CD4-positive, alpha-beta T cell (primary cell): ENCODE measurements at regions of chr2 and their contacts with region 1.

Region 1: DNA sequence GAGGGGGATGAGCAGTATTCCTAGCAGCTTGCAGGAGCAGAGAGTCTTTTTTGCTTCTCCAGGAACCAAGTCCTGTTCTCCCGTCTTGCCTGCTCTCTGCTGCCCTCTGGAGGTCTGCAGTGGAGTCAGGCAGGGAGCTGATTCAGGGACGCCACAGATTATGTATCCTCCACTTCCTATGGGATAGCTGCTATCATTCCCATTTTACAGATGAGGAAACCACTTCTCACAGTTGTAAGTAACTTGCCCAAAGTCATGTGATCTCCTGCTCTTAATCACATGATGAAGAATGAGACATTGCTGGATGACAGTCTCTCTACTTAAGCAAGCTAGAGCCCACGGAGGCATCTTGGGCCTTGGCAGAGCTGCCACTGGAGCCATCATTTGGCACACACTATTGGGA is 8.3 kb downstream of the SLC4A5 start:
- DNase-seq: peak; percentile 62 to 86 (median 72)
- ATAC-seq: peak; percentile 91
- H3K4me3 ChIP-seq: no peak overlapping the region
- H3K4me3 Mint-ChIP-seq: no peak overlapping the region
- H3K27ac ChIP-seq: no peak overlapping the region
- H3K27ac Mint-ChIP-seq: no peak overlapping the region
- H3K4me1 ChIP-seq: peaks cover 9% of the 10 kb centered on the region
- H3K4me1 Mint-ChIP-seq: peaks cover 12% of the 10 kb centered on the region
- H3K27me3 ChIP-seq: no peaks in the 10 kb centered on the region
- H3K27me3 Mint-ChIP-seq: no peaks in the 10 kb centered on the region
- CTCF ChIP-seq: peak; percentile 99

Region 2: GRCh38 chr2:73337828-73338227 is 997.1 kb before region 1 on chr2:
- CTCF ChIA-PET with region 1: no interaction called
- POLR2A ChIA-PET with region 1: no interaction called
- intact Hi-C with region 1: no loop called
- DNase-seq: no peak
- ATAC-seq: no peak
- H3K4me3 ChIP-seq: no peak overlapping the region
- H3K4me3 Mint-ChIP-seq: no peak overlapping the region
- H3K27ac ChIP-seq: no peak overlapping the region
- H3K27ac Mint-ChIP-seq: no peak overlapping the region
- H3K4me1 ChIP-seq: no peaks in the 10 kb centered on the region
- H3K4me1 Mint-ChIP-seq: no peaks in the 10 kb centered on the region
- H3K27me3 ChIP-seq: peaks cover 0 to 3% of the 10 kb centered on the region in 2 experiments
- H3K27me3 Mint-ChIP-seq: peaks cover 8% of the 10 kb centered on the region
- CTCF ChIP-seq: no peak

Region 3: GRCh38 chr2:74250189-74250631 is 84.7 kb before region 1 on chr2:
- CTCF ChIA-PET with region 1: interaction called, 47 read pairs
- POLR2A ChIA-PET with region 1: interaction called, 14 read pairs
- intact Hi-C with region 1: loop called (anchors 1 kb)
- DNase-seq: peak; percentile 27 to 79 (median 46)
- ATAC-seq: peak; percentile 56
- H3K4me3 ChIP-seq: no peak overlapping the region
- H3K4me3 Mint-ChIP-seq: no peak overlapping the region
- H3K27ac ChIP-seq: no peak overlapping the region
- H3K27ac Mint-ChIP-seq: no peak overlapping the region
- H3K4me1 ChIP-seq: peaks cover 5% of the 10 kb centered on the region
- H3K4me1 Mint-ChIP-seq: no peaks in the 10 kb centered on the region
- H3K27me3 ChIP-seq: no peaks in the 10 kb centered on the region
- H3K27me3 Mint-ChIP-seq: no peaks in the 10 kb centered on the region
- CTCF ChIP-seq: peak; percentile 84

Region 4: DNA sequence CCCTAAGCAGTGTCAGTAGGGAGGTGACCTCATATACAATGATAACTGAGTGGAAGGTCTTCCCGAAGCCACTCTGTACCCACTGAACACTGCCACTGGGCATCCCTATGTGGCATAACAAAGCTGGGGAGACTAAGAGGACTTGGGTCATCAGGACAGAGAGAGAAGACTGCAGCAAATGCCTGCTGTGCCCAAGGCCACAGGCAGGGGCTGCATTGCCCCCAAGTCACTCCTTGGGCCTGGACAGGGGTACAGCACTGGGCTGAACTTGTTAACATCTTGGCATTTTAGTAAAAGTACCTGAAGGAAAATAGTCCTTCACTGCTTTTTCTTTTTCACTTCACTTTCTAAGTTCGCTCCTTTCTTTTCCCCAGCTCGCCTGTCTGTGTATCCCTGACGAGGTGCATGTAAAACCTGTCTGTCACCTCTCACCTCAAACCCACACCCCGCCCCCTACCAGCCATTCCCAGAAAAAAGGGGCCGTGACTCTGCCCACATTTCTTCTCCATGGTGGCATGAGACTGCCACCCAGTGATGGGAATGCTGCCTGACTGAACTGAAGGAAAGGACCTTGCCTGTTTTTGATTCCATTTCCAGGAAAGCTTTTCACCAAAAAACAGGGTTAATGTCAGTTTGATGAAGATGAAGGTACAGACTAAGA is 73.6 kb before region 1 on chr2:
- CTCF ChIA-PET with region 1: interaction called, 3 read pairs
- POLR2A ChIA-PET with region 1: no interaction called
- intact Hi-C with region 1: loop called in 1 of 2 experiments (anchors 1 kb)
- DNase-seq: no peak
- ATAC-seq: no peak
- H3K4me3 ChIP-seq: no peak overlapping the region
- H3K4me3 Mint-ChIP-seq: no peak overlapping the region
- H3K27ac ChIP-seq: no peak overlapping the region
- H3K27ac Mint-ChIP-seq: no peak overlapping the region
- H3K4me1 ChIP-seq: peaks cover 2% of the 10 kb centered on the region
- H3K4me1 Mint-ChIP-seq: peaks cover 9% of the 10 kb centered on the region
- H3K27me3 ChIP-seq: no peaks in the 10 kb centered on the region
- H3K27me3 Mint-ChIP-seq: no peaks in the 10 kb centered on the region
- CTCF ChIP-seq: no peak

Region 5: GRCh38 chr2:74267068-74267467 is 67.9 kb before region 1 on chr2:
- CTCF ChIA-PET with region 1: interaction called, 9 read pairs
- POLR2A ChIA-PET with region 1: no interaction called
- intact Hi-C with region 1: loop called (anchors 1 kb)
- DNase-seq: peak; percentile 26 to 85 (median 50)
- ATAC-seq: peak; percentile 100
- H3K4me3 ChIP-seq: peak overlapping the region; percentile 4
- H3K4me3 Mint-ChIP-seq: peak overlapping the region; percentile 5
- H3K27ac ChIP-seq: no peak overlapping the region
- H3K27ac Mint-ChIP-seq: peak overlapping the region; percentile 14
- H3K4me1 ChIP-seq: peaks cover 9% of the 10 kb centered on the region
- H3K4me1 Mint-ChIP-seq: peaks cover 35% of the 10 kb centered on the region
- H3K27me3 ChIP-seq: no peaks in the 10 kb centered on the region
- H3K27me3 Mint-ChIP-seq: no peaks in the 10 kb centered on the region
- CTCF ChIP-seq: peak; percentile 77

Region 6: GRCh38 chr2:74349889-74350288 is 15.0 kb after region 1 on chr2:
- CTCF ChIA-PET with region 1: interaction called, 10 read pairs
- POLR2A ChIA-PET with region 1: no interaction called
- intact Hi-C with region 1: no loop called
- DNase-seq: no peak
- ATAC-seq: no peak
- H3K4me3 ChIP-seq: no peak overlapping the region
- H3K4me3 Mint-ChIP-seq: no peak overlapping the region
- H3K27ac ChIP-seq: no peak overlapping the region
- H3K27ac Mint-ChIP-seq: no peak overlapping the region
- H3K4me1 ChIP-seq: no peaks in the 10 kb centered on the region
- H3K4me1 Mint-ChIP-seq: no peaks in the 10 kb centered on the region
- H3K27me3 ChIP-seq: no peaks in the 10 kb centered on the region
- H3K27me3 Mint-ChIP-seq: no peaks in the 10 kb centered on the region
- CTCF ChIP-seq: no peak